Astrocyte of the cerebellum (primary cell): ENCODE measurements at regions of chr18 and their contacts with region 1.

Region 1: GRCh38 chr18:21191596-21192307 is 50.3 kb upstream of the GREB1L start:
- DNase-seq: peak; percentile 11
- H3K4me3 ChIP-seq: no peak overlapping the region
- CTCF ChIP-seq: peak; percentile 80

Region 2: DNA sequence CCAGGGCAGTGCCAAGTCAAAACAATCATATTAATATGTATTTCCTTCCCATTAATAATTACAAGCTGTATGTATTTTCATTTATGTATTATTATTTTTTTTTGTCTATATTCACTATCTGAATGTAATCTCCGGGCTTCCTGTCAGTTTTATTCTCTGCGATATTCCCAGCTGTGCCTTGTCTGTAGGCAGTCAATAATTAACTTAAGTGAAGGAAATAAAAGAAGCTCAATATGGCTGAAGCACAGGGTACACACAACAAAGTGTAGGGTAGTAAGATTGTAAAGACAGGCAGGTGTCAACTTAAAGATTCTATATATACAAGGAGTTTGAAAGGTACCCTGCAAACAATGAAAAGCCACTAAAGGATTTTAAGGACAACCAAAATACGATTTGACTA is 203.0 kb before region 1 on chr18:
- in situ Hi-C with region 1: loop called (anchors 5 kb)
- DNase-seq: no peak
- H3K4me3 ChIP-seq: no peak overlapping the region
- CTCF ChIP-seq: no peak

Region 3: DNA sequence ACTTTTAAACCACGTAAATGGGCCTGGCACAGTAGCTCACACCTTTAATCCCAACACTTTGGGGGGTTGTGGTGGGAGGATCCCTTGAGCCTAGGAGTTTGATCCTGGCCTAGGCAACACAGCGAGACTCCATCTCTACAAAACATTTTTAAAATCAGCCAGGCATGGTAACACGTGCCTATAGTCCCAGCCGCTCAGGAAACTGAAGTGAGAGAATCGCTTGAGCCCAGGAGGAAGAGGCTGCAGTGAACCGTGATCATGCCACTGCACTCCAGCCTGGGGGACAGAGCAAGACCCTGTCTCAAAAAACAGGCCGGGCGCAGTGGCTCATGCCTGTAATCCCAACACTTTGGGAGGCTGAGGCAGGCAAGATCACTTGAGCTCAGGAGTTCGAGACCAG is 92.3 kb before region 1 on chr18:
- in situ Hi-C with region 1: no loop called
- DNase-seq: no peak
- H3K4me3 ChIP-seq: no peak overlapping the region
- CTCF ChIP-seq: no peak

Region 4: GRCh38 chr18:21109936-21110663 is 81.7 kb before region 1 on chr18:
- in situ Hi-C with region 1: loop called (anchors 5 kb)
- DNase-seq: no peak
- H3K4me3 ChIP-seq: peak overlapping the region; percentile 96
- CTCF ChIP-seq: no peak